Heart left ventricle (tissue), 16 donors: ENCODE measurements at regions of chr2 and their contacts with region 1.

Region 1: DNA sequence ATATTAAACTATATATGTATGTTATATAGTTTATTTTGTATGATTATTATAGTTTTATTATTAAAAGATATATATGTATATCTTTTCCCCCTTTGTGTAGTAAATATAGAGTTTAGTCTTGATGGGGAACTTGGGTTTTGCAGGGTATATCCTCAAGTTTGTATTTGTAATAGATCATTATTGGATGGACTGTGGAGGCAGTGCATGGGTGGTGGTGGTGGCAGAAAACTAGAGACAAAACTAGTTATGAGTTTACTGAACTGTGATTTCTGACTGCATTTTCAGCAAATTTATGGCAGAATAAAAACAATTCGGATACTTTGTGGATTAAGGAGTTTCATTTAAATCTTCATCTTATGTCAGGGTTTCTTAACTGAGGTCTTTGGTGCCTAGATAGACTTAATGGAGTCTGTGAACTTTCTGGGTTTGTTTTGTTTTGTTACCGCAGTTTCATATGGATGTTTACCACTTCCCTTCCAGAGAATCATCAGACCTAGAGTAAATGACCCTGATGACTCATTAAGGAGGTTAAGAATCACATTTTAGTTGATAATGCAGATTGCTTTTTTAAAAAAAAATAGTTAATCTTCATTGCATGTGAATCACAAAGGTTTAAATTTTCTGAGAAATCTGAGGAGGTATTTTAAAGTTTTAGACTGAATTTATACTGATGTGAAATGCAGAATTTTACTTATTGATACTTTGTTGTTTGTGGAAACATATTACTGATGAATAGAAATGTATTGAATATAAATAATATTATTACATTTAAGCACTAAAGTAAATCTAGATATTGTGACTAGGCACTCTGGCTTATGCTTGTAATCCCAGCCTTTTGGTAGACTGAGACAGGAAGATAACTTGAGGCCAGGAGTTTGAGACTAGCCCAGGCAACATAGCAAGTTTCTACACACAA is 14.5 kb downstream of the EPC2 start:
- DNase-seq: no peak
- ATAC-seq: peak in 1 of 4 donors; percentile 19
- H3K4me3 ChIP-seq: no peak overlapping the region
- H3K27ac ChIP-seq: peak overlapping the region in 1 of 12 donors; percentile 10
- H3K4me1 ChIP-seq: peaks cover 0 to 64% (median 47%) of the 10 kb centered on the region in 12 donors
- H3K27me3 ChIP-seq: no peaks in the 10 kb centered on the region
- CTCF ChIP-seq: no peak
- POLR2A ChIP-seq: no peak

Region 2: GRCh38 chr2:148764815-148765214 is 105.8 kb after region 1 on chr2:
- intact Hi-C with region 1: loop called in 1 of 10 experiments (anchors 10 kb)
- DNase-seq: no peak
- ATAC-seq: no peak
- H3K4me3 ChIP-seq: no peak overlapping the region
- H3K27ac ChIP-seq: no peak overlapping the region
- H3K4me1 ChIP-seq: no peaks in the 10 kb centered on the region
- H3K27me3 ChIP-seq: no peaks in the 10 kb centered on the region
- CTCF ChIP-seq: no peak
- POLR2A ChIP-seq: no peak

Region 3: DNA sequence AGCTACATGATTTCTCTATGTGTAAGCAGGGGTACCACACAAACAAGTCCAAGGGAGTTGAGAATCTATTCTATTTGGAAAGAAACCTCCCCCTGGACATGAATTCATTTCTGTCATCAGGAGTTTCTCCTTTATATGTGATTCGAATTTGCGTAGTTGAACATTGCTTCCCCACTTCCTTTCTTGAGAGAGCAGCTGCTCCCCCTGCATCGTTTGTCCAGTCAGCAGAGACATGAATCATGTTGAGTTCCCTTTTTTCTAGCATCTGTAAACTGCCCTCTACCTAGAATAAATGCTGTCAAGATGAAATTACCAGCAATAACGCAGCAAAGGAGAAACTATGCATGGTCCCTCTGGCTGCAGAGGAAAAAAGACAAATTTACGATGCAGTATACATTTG is 289.8 kb after region 1 on chr2:
- intact Hi-C with region 1: no loop called
- DNase-seq: no peak
- ATAC-seq: peak in 2 of 4 donors; percentile 26 to 65
- H3K4me3 ChIP-seq: no peak overlapping the region
- H3K27ac ChIP-seq: no peak overlapping the region
- H3K4me1 ChIP-seq: no peaks in the 10 kb centered on the region
- H3K27me3 ChIP-seq: no peaks in the 10 kb centered on the region
- CTCF ChIP-seq: no peak
- POLR2A ChIP-seq: no peak

Region 4: DNA sequence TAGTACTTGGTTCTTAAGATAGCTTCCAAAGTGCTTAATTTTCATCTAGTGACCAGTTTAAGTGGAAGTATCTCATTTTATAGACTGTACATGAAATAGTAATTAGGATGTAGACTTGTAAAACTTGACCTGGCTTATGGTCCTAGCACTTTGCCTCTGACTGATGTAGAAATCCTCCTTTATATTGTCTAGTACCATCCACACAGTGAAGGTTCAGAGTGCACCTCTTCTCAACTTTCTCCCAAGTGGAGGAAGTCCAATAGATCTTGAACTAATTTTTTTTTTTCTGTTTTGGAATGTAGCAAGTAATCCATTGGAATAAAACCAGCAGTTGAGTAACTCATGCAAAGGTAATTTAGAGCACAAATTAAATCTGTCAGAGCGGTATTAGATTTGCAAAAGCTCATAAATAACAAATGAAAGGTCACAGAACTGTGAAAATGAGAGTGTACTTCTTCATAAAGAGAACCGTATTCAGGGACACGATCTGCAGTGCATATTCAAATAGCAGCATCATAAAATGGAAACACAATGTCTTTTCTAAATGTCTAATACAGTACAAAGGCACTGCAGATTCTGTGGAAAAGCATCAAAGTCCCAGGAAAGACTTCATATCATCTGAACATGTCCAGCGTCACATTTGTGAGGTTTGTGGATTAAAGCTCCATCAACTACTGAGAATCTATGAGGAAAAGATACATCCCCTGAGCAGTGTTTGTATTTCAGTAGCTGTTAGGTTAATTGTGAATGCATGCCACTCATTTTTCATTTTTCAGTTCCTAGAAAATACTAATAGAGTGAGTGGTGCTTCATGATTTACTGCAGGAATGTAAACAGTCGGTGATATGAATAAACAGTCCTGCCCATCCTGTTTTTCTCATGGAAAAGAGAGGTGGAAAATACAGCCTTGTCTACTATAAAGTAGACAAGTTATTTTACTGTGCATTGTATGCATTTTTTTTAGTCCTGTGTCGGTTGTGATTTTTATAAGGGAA is 772.0 kb after region 1 on chr2:
- intact Hi-C with region 1: no loop called
- DNase-seq: no peak
- ATAC-seq: no peak
- H3K4me3 ChIP-seq: no peak overlapping the region
- H3K27ac ChIP-seq: no peak overlapping the region
- H3K4me1 ChIP-seq: no peaks in the 10 kb centered on the region
- H3K27me3 ChIP-seq: no peaks in the 10 kb centered on the region
- CTCF ChIP-seq: no peak
- POLR2A ChIP-seq: no peak